Activated B cell treated with CpG ODN at 0.5 μM for 24 hours (primary cell): ENCODE measurements at regions of chr2 and their contacts with region 1.

Region 1: GRCh38 chr2:39059366-39059952 is 61.4 kb downstream of the SOS1 start:
- DNase-seq: no peak
- ATAC-seq: no peak
- H3K4me3 Mint-ChIP-seq: no peak overlapping the region
- H3K27ac Mint-ChIP-seq: no peak overlapping the region
- H3K4me1 Mint-ChIP-seq: no peaks in the 10 kb centered on the region
- H3K27me3 Mint-ChIP-seq: no peaks in the 10 kb centered on the region
- CTCF ChIP-seq: peak; percentile 67

Region 2: GRCh38 chr2:38947240-38948239 is 111.9 kb before region 1 on chr2:
- CTCF ChIA-PET with region 1: interaction called, 10 read pairs
- POLR2A ChIA-PET with region 1: no interaction called
- intact Hi-C with region 1: loop called (anchors 1 kb)
- DNase-seq: no peak
- ATAC-seq: peak; percentile 66
- H3K4me3 Mint-ChIP-seq: no peak overlapping the region
- H3K27ac Mint-ChIP-seq: no peak overlapping the region
- H3K4me1 Mint-ChIP-seq: no peaks in the 10 kb centered on the region
- H3K27me3 Mint-ChIP-seq: no peaks in the 10 kb centered on the region
- CTCF ChIP-seq: no peak